ENCODE measurements at regions of chr3 and their contacts with region 1.

Region 1: DNA sequence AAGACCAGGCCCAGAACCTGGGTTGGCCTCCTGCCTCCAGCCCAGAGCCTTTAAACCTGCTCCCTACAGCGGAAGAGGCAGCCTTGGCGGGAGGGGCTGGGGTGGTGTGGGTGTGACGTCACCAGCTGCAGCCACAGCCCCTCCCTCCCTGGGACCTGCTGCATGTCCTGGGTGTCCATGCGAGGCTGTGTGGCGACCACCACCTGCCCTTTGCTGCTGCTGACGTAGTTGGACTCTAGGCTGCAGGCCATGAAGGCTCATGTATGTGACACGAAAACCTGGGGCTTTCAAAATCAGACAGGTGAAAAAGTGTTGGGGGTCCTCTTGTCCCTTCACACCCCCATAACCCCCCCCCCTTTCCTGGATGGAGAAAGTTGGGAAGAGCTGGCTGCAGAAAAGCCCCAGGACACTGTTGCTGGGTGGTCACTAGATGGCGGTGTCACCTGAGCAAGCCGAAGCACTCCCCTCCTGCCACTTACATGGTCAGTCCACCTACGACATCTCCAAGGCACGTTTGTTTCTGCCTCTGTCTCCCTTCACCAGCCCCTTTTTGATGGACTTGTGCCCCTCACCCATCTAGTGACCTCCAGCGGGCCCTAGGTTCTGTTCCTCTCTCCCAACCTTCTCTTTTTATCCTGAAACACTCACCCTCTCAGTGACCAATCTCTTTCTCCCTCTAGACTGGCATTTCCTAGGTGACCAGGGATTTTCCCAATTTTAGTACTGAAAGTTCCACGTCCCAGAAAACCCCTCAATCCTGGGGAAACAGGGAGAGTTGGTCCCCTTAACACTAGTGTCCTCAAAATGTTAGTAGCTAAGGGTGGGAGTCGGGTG is 35.2 kb downstream of the SLC6A20 start:
- DNase-seq: peak in 2 of 3 donors; percentile 57 to 65
- ATAC-seq: peak; percentile 91 to 98 (median 96)
- H3K4me3 ChIP-seq: no peak overlapping the region
- H3K27ac ChIP-seq: no peak overlapping the region
- H3K4me1 ChIP-seq: peaks cover 0 to 14% (median 4%) of the 10 kb centered on the region in 4 donors
- H3K27me3 ChIP-seq: no peaks in the 10 kb centered on the region
- CTCF ChIP-seq: peak; percentile 67 to 78 (median 72)
- POLR2A ChIP-seq: no peak

Region 2: DNA sequence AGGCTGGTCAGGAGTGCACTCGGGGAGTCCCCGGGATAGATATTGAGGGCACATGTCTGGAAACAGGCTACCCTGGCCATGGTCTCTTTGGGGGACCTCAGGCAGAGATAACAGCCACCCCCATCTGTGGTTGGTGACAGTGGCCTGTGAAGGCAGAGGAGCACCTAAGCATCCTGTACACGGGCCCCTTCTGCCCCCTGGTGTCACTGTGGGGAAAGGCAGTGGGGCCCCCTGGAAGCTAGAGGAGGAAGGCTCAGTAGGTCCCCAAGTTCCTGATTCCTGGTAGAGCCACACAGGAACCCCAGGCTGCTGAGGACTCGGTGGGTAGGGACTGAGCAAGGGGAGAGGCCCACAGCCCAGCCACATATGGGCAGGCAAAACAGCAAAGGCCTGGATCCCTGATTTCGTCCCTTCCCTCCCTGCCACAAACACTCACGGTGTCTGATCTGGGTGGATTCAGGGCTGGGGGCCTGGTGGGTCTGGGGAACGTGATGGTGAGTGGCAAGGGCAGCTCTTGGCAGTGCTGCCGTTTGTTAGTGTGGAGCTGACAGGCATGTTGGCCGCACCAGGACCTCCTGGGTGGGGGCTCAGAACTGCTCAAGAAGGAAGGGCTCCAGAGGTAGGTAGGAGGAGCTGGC is 168.1 kb after region 1 on chr3:
- intact Hi-C with region 1: loop called (anchors 5 to 10 kb)
- DNase-seq: peak in 1 of 3 donors; percentile 44
- ATAC-seq: peak; percentile 79 to 90 (median 83)
- H3K4me3 ChIP-seq: no peak overlapping the region
- H3K27ac ChIP-seq: no peak overlapping the region
- H3K4me1 ChIP-seq: no peaks in the 10 kb centered on the region
- H3K27me3 ChIP-seq: no peaks in the 10 kb centered on the region
- CTCF ChIP-seq: peak; percentile 63 to 77 (median 66)
- POLR2A ChIP-seq: no peak

Region 3: DNA sequence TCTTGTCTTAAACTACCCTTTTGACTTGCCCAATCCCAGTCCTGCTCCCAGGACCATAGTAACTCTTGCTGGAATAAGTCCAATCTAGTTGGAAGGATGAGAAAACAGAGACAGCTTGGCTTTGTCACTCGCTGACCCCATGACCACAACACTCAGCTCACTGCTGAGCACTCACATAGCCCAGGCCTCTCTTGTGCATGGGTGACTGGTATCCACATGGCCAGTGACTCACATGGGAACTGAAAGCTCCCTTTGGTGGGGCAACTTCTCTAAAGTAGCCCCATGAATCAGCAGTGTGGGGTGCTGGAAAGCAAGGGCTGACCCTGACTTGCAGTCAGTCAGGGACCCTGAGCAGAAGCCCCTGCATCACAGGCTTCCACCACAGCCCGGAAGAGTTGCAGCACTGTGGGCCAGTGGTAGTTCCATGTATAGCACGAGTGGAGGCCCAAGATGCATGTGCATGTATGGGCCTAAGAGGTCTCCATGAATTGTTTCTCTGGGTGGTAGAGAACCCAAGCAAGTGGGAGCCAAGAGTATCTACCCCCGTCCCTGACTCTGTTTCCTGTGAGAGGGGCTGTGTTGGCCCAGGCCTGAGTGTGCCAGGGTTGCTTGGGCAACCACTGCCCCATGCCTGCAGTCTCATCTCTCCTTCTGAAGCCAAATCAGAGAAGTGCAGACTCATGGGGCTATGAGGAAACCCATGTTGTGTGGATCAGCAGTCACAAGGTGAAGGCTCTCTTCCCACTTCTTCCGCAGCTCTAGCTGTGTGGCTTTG is 328.3 kb after region 1 on chr3:
- intact Hi-C with region 1: loop called in 1 of 2 experiments (anchors 10 kb)
- DNase-seq: peak; percentile 47 to 69 (median 64)
- ATAC-seq: peak; percentile 74 to 78 (median 76)
- H3K4me3 ChIP-seq: no peak overlapping the region
- H3K27ac ChIP-seq: peak overlapping the region in 2 of 3 donors; percentile 33 to 44
- H3K4me1 ChIP-seq: no peaks in the 10 kb centered on the region
- H3K27me3 ChIP-seq: no peaks in the 10 kb centered on the region
- CTCF ChIP-seq: no peak
- POLR2A ChIP-seq: no peak

Measured in right lobe of liver (tissue), 6 donors.